Activated T-helper 1 cell treated with anti-CD3 and anti-CD28 coated beads, Interleukin-12 subunit alpha, Interleukin-12 subunit beta, Interleukin-2, Interleukin-4 antibody, amounts not matched to agents 30 ng/mL and 10 ng/mL and 1 ng/mL, durations not matched to agents 14 hours and 24 hours and 36 hours (primary cell): ENCODE measurements at regions of chr11 and their contacts with region 1.

Region 1: GRCh38 chr11:59615637-59616395 is at the start of gene OSBP:
- DNase-seq: peak; percentile 96
- H3K4me3 Mint-ChIP-seq: peak within 1 kb of the TSS; percentile 98
- H3K27ac Mint-ChIP-seq: peak within 1 kb of the TSS; percentile 96
- H3K4me1 Mint-ChIP-seq: peaks cover 37% of the 10 kb centered on the region
- H3K27me3 Mint-ChIP-seq: no peaks in the 10 kb centered on the region
- total RNA-seq, gene OSBP: 40.5 and 41.7 TPM in 2 replicates

Region 2: GRCh38 chr11:57667736-57668435 is 1947.9 kb before region 1 on chr11 and contains the start of gene ZDHHC5:
- intact Hi-C with region 1: loop called (anchors 10 kb)
- DNase-seq: peak; percentile 99
- H3K4me3 Mint-ChIP-seq: peak within 1 kb of the TSS; percentile 99
- H3K27ac Mint-ChIP-seq: peak within 1 kb of the TSS; percentile 97
- H3K4me1 Mint-ChIP-seq: peaks cover 31% of the 10 kb centered on the region
- H3K27me3 Mint-ChIP-seq: no peaks in the 10 kb centered on the region
- total RNA-seq, gene ZDHHC5: 78.4 and 79.1 TPM in 2 replicates

Region 3: DNA sequence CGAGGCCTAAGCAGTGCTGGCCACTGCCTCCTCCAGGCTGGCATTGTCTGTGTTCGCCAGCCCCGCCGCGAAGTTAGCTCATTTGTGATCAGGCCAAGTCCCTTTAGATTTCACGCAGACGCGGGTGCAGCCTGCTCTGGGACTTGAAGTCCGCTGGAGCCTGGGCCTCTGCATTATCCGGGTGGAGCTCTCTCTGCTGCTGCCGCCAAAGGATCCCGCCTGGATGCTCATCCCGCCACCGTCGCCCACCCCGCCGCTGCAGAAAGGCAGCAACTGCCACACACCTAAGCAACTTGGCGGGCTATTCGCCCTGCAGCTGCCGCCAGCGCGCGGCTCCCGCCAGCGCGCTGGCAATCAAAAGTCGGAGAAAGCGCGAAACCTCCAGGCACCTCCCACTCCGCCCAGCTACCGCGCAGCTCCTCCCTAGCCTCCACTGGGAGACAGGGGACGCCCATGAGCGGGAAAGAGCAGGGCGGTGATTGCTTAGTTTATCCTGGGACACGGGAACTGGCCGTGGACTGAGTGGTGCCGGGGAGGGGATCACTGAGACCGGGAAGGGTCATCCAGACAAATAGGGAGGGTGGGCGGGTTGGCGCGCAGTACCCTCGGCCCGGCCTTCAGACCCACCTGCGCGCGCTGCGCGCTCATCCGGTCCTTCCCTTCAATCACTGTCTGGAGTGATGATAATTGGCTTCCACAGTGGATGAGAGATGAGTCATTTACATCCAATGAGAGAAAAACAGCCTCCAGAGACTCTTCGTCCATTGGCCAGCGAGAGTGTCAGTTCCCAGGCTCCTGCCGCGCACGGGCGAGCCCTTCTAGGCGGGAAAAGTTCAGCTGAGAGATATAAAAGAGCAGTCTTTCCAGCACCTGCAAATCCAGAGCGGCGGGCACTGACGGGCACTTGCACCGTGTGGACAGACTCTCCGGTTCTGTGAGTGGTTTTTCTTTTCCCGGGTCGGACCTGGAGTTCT is 509.2 kb before region 1 on chr11 and contains the start of gene FAM111B:
- intact Hi-C with region 1: loop called (anchors 1 kb)
- DNase-seq: peak; percentile 73
- H3K4me3 Mint-ChIP-seq: peak within 1 kb of the TSS; percentile 93
- H3K27ac Mint-ChIP-seq: peak within 1 kb of the TSS; percentile 82
- H3K4me1 Mint-ChIP-seq: peaks cover 80% of the 10 kb centered on the region
- H3K27me3 Mint-ChIP-seq: no peaks in the 10 kb centered on the region
- total RNA-seq, gene FAM111B: 54.9 and 57.3 TPM in 2 replicates

Region 4: GRCh38 chr11:59550368-59550841 is 65.4 kb before region 1 on chr11:
- intact Hi-C with region 1: loop called (anchors 1 kb)
- DNase-seq: peak; percentile 82
- H3K4me3 Mint-ChIP-seq: peak overlapping the region; percentile 82
- H3K27ac Mint-ChIP-seq: peak overlapping the region; percentile 93
- H3K4me1 Mint-ChIP-seq: peaks cover 38% of the 10 kb centered on the region
- H3K27me3 Mint-ChIP-seq: peaks cover 19% of the 10 kb centered on the region

Region 5: DNA sequence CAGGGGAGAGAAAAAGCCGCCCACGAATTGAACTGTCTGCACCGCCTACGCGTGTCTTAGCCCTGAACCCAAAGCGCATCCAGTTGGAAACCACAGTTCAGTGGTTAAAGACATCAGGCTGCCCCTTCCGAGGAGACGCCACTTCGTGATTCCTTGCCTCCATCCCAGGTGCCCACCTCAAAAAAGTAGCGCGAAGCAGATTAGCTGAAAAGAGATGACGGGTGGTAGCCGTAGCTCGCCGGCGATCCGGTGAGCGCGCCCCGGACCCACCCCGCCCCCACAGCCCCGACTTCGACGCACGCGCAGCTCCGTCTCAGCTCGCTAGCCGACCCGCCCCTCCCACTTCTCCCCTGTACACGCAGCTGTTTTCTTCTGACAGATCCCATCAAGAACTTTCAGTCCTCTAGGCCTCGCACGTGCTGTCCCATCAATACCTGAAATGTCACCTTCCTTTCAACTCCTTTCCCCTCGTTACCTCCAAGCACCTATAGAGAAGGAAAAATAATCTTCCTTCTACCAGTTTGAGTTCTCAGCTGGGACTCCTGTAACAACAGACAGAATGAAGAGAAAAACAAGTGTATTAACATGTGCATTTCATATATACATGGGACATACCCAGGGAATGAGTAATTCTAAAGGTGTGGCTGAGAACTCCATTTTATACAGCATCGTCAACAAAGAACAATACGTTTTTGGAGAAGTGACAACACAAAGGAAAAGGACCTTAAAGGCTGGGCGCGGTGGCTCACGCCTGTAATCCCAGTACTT is 54.9 kb before region 1 on chr11:
- intact Hi-C with region 1: loop called (anchors 1 kb)
- DNase-seq: peak; percentile 54
- H3K4me3 Mint-ChIP-seq: peak overlapping the region; percentile 92
- H3K27ac Mint-ChIP-seq: peak overlapping the region; percentile 98
- H3K4me1 Mint-ChIP-seq: peaks cover 48% of the 10 kb centered on the region
- H3K27me3 Mint-ChIP-seq: peaks cover 10% of the 10 kb centered on the region

Region 6: DNA sequence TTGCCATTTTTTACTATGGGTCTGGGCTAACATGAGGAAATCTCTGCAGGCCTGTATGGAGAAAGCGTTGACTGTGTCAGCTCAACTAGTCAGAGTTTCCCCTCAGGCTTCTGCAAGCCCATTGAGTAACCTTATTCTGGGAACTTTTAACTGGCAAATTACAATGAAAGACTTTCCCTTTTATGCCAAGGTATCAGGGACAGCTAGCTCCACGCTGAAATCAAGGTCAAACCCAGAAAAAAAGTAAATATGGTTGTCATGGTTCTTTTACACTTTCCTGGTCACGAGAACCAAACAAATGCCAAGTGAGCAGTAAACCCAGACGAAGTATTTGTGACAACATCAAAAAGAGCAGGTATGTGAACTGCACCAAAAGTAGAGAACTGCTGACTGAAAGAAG is 14.0 kb before region 1 on chr11:
- intact Hi-C with region 1: no loop called
- DNase-seq: no peak
- H3K4me3 Mint-ChIP-seq: no peak overlapping the region
- H3K27ac Mint-ChIP-seq: no peak overlapping the region
- H3K4me1 Mint-ChIP-seq: peaks cover 11% of the 10 kb centered on the region
- H3K27me3 Mint-ChIP-seq: no peaks in the 10 kb centered on the region

Region 7: DNA sequence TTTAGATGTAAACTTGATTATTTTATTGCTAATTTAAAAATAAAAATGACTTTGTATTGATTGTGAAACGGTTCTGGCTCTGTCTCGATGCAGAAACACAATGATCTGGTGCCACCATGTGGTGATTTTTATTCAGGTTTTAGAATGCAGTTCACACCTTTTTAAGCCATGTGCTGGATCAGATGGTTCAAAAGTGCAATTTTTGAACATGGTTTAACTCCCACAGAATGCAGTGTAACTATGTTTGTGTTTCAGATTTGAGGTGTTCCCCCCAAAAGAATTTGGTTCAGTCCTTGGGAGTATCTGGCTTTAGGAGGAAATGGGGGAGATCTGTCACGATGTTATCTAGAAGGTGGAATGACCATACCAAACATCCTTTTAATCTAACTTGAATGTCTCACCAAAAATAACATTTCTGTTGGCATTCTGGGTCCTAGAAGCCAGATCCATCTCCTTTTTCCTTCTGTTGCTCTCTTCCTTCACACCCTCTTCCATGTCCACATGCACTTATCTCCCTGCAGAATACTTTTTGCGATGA is 186.9 kb after region 1 on chr11:
- intact Hi-C with region 1: loop called (anchors 1 kb)
- DNase-seq: peak; percentile 50
- H3K4me3 Mint-ChIP-seq: no peak overlapping the region
- H3K27ac Mint-ChIP-seq: no peak overlapping the region
- H3K4me1 Mint-ChIP-seq: peaks cover 24% of the 10 kb centered on the region
- H3K27me3 Mint-ChIP-seq: no peaks in the 10 kb centered on the region

Region 8: GRCh38 chr11:59810189-59810910 is 194.5 kb after region 1 on chr11 and contains the start of gene MRPL16:
- intact Hi-C with region 1: loop called (anchors 1 kb)
- DNase-seq: peak; percentile 82
- H3K4me3 Mint-ChIP-seq: peak within 1 kb of the TSS; percentile 96
- H3K27ac Mint-ChIP-seq: peak within 1 kb of the TSS; percentile 91
- H3K4me1 Mint-ChIP-seq: peaks cover 28% of the 10 kb centered on the region
- H3K27me3 Mint-ChIP-seq: no peaks in the 10 kb centered on the region
- total RNA-seq, gene MRPL16: 88.3 and 93.9 TPM in 2 replicates

Region 9: DNA sequence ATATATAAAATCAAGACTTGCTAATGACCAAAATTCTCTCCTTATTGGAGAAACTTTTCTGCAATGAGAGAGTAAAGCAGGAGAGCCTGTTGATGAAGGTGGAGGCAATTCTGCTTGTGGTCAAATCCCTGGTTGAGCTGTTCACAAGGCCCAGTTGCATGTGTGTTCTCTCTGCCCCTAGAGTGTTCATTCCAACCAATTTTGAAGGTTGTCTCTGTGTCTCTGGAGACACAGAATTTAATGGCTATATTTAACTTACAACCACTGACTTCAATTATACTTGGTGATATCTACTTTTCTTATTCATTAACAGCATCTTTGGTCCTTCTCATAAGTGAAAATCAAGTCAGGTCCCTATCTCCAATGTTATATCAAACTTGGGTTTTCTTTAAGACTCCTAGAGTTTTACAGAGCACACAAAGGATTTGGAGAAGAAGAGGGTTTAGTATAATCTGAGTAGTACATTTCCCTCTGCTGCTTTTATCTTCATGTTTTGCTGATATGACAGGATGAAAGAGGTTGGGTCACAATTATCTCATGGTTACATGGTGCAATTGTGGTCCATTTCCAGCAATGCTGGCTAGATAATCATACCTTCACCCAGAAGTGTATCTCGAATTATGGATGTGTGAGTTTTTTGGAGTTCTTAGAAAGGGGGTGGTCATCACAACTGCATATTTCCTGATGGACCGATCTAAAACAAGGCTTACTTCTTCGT is 352.0 kb after region 1 on chr11:
- intact Hi-C with region 1: no loop called
- DNase-seq: no peak
- H3K4me3 Mint-ChIP-seq: no peak overlapping the region
- H3K27ac Mint-ChIP-seq: no peak overlapping the region
- H3K4me1 Mint-ChIP-seq: no peaks in the 10 kb centered on the region
- H3K27me3 Mint-ChIP-seq: no peaks in the 10 kb centered on the region